AG04450 (cell line): ENCODE measurements at regions of chr9 and their contacts with region 1.

Region 1: GRCh38 chr9:20611751-20612287 is 10.5 kb downstream of the MLLT3 start:
- DNase-seq: no peak
- H3K4me3 ChIP-seq: peak overlapping the region; percentile 7; the same call in 1 of the 2 replicates
- H3K27ac ChIP-seq: no peak overlapping the region
- H3K27me3 ChIP-seq: no peaks in the 10 kb centered on the region
- CTCF ChIP-seq: peak; percentile 57

Region 2: GRCh38 chr9:20242510-20243189 is 369.2 kb before region 1 on chr9:
- CTCF ChIA-PET with region 1: no interaction called
- POLR2A ChIA-PET with region 1: no interaction called
- DNase-seq: no peak
- H3K4me3 ChIP-seq: no peak overlapping the region
- H3K27ac ChIP-seq: no peak overlapping the region
- H3K27me3 ChIP-seq: peaks cover 9% of the 10 kb centered on the region
- CTCF ChIP-seq: no peak

Region 3: GRCh38 chr9:20599195-20599594 is 12.6 kb before region 1 on chr9:
- CTCF ChIA-PET with region 1: interaction called, 10 read pairs
- POLR2A ChIA-PET with region 1: no interaction called
- DNase-seq: no peak
- H3K4me3 ChIP-seq: no peak overlapping the region
- H3K27ac ChIP-seq: no peak overlapping the region
- H3K27me3 ChIP-seq: no peaks in the 10 kb centered on the region
- CTCF ChIP-seq: no peak